GM23248 (cell line): ENCODE measurements at regions of chr5 and their contacts with region 1.

Region 1: DNA sequence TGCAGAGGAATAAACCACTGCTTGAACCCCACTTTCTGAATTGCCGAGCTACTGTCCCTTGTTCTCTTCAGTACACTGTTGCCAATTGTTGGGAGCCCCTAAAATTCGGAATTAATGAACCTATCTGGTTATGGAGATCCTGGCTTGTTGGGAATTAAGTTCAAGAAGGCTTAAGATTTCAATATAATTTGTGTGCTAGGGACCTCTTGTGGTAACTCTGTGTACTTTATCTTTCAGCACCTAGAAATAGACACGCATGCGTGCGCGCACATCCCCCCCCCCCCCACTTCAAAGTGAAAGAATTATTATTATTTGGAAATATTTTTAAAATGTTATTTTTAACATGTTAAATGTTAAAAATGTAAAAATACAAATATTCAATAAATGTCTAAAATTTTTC is 53.3 kb upstream of the FAM169A start:
- DNase-seq: peak; percentile 73
- H3K4me3 ChIP-seq: no peak overlapping the region
- H3K27ac ChIP-seq: no peak overlapping the region
- H3K4me1 ChIP-seq: no peaks in the 10 kb centered on the region
- H3K27me3 ChIP-seq: no peaks in the 10 kb centered on the region

Region 2: DNA sequence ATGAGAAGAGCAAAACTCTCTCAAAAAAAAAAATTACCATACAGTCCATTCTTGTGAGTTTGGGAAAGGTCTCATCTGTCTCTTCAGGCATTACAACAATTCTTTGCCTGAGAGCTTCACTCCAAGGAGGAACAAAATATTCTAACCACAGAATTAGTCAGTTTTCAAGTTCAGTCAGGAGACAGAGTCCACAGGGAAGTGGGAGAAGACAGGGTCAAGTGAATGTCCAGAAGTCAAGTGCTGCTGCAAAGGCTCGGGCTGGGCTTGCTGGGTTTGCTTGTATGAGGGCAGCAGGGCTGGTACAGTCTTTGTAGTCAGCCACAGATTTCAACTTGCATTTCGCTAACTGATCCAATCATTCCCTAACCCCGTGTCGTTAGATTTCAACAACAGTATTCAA is 252.1 kb before region 1 on chr5:
- in situ Hi-C with region 1: loop called (anchors 10 kb)
- DNase-seq: peak; percentile 48
- H3K4me3 ChIP-seq: no peak overlapping the region
- H3K27ac ChIP-seq: no peak overlapping the region
- H3K4me1 ChIP-seq: 0 out of 2 replicates have a peak, but pooled peaks cover 7% of the 10 kb centered on the region
- H3K27me3 ChIP-seq: no peaks in the 10 kb centered on the region

Region 3: DNA sequence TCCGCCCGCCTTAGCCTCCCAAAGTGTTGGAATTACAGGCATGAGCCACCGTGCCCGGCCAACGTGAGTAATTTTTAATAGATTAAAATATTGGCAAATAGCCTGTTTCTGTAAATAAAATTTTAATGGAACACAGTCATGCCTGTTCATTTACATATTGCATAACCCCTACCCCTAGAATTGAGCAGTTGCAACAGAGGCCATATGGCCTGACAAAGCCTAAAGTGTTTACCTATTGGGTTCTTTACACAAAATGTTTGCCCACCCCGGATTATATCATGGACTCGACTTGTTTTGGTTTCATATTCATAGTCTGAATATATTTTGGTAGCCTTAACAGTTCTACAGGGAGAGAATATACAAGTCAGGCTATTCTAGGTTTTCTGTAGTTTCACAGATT is 147.1 kb before region 1 on chr5:
- in situ Hi-C with region 1: loop called (anchors 5 kb)
- DNase-seq: peak; percentile 5
- H3K4me3 ChIP-seq: no peak overlapping the region
- H3K27ac ChIP-seq: no peak overlapping the region
- H3K4me1 ChIP-seq: peaks cover 5% of the 10 kb centered on the region; the same call in 1 of the 2 replicates
- H3K27me3 ChIP-seq: no peaks in the 10 kb centered on the region

Region 4: GRCh38 chr5:75433814-75434506 is 514.5 kb after region 1 on chr5:
- in situ Hi-C with region 1: no loop called
- DNase-seq: no peak
- H3K4me3 ChIP-seq: no peak overlapping the region
- H3K27ac ChIP-seq: no peak overlapping the region
- H3K4me1 ChIP-seq: 0 out of 2 replicates have a peak, but pooled peaks cover 3% of the 10 kb centered on the region
- H3K27me3 ChIP-seq: no peaks in the 10 kb centered on the region

Region 5: DNA sequence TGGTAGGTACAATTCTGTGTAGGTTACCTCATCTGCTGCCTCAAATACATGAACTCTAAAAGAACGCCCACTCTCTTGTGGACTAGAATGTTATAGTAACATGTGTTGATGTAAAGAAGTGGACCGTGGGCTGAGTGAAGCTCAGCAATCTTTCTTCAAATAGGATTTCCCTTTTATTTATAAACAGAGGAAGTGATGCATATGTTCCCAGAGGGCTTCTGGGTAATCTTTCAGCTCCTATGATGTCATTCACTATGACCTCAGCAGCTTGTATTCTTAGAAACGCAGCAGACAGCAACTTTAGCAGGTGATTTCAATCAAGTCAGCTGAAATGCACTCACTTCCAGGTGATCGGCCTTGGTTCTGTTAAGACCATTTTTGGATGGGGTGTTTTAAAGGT is 1689.3 kb after region 1 on chr5:
- in situ Hi-C with region 1: no loop called
- DNase-seq: peak; percentile 45
- H3K4me3 ChIP-seq: no peak overlapping the region
- H3K27ac ChIP-seq: no peak overlapping the region
- H3K4me1 ChIP-seq: peaks cover 11% of the 10 kb centered on the region
- H3K27me3 ChIP-seq: peaks cover 48% of the 10 kb centered on the region